GM12878 (cell line): ENCODE measurements at regions of chr13 and their contacts with region 1.

Region 1: DNA sequence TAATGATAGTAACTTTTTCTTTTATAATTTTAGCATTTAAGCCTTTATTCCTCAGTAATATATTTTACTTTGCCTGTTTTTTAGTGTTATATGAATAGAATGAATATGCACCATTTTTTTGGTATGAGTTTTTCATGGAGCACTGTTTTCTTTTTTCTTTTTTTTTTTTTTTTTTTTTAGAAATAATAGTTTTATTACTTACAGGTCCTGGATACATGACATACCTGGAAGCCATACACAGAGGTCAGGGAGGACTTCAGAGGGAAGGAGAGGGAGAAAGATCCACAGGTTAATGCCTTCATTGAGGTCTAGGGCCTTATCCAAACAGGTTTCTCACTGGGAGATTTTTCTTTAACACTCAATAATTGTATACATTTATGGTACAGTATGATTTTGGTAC is 26.4 kb downstream of the KCTD4 start:
- DNase-seq: no peak
- ATAC-seq: no peak
- H3K4me3 ChIP-seq: no peak overlapping the region
- H3K27ac ChIP-seq: no peak overlapping the region
- H3K4me1 ChIP-seq: no peaks in the 10 kb centered on the region
- H3K27me3 ChIP-seq: no peaks in the 10 kb centered on the region
- CTCF ChIP-seq: no peak
- EP300 ChIP-seq: no peak
- POLR2A ChIP-seq: no peak
- RAD21 ChIP-seq: no peak

Region 2: GRCh38 chr13:45119991-45120864 is 54.2 kb before region 1 on chr13 and contains the start of gene GTF2F2:
- CTCF ChIA-PET with region 1: no interaction called
- POLR2A ChIA-PET with region 1: no interaction called
- RAD21 ChIA-PET with region 1: no interaction called
- SMC1A ChIA-PET with region 1: no interaction called
- in situ Hi-C with region 1: loop called (anchors 5 kb)
- intact Hi-C with region 1: no loop called
- DNase-seq: peak; percentile 72
- ATAC-seq: peak; percentile 87
- H3K4me3 ChIP-seq: peak within 1 kb of the TSS; percentile 89
- H3K27ac ChIP-seq: peak within 1 kb of the TSS; percentile 83
- H3K4me1 ChIP-seq: no peaks in the 10 kb centered on the region
- H3K27me3 ChIP-seq: no peaks in the 10 kb centered on the region
- CTCF ChIP-seq: no peak
- EP300 ChIP-seq: no peak
- POLR2A ChIP-seq: peak; percentile 79
- RAD21 ChIP-seq: no peak
- polyA plus RNA-seq, gene GTF2F2: 14.5 to 23.3 TPM